Natural killer cell (primary cell): ENCODE measurements at regions of chr15 and their contacts with region 1.

Region 1: DNA sequence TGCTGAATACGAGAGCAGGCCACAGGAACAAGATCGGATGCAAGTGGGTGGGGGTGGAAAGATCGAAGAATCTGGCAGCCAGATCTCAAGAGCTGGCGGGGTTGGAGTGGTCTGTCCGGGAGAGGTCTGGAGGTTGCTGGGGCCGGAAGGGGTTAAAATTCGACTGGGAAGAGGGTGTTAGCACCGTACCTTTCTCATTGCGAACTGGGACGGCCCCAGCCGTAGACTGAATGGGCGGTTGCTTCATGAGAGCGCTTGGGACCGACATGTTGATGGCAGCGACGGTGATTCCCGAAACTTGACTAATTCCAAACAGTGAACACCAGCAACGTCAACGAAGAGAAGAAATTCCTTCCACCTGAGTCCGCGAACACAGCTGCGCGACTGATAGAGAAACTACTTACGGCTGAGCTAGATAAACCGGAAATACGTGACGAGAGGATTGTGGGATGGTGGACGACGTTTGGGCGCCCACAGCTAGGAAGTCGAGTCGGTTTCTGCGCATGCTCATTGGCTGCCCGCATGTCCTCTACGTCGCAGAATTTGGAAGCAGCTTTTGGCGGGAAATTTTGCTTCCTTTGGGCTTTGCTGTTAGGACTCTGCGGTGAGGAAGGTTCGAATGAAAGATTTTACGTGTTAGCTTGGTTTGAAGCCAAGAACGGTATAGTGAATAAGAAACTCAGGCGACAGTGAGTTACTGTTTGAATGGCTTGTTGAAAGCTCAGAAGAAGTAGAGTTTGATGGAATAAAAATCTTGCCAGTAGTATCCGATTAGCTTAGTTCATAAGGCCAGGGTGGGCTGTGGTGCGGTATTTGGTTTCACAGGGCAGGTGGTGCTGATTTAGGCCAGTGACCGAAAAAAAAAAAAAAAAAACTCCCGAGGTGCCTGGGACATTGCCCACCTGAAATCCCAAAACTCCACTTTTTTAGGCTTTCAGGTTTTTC is at the start of gene MFAP1:
- DNase-seq: peak; percentile 80 to 99
- ATAC-seq: peak; percentile 87 to 92 (median 90)
- H3K4me3 ChIP-seq: peak within 1 kb of the TSS; percentile 99
- H3K4me3 Mint-ChIP-seq: peak within 1 kb of the TSS; percentile 99
- H3K27ac ChIP-seq: peak within 1 kb of the TSS; percentile 97
- H3K27ac Mint-ChIP-seq: peak within 1 kb of the TSS; percentile 99
- H3K4me1 ChIP-seq: peaks cover 34% of the 10 kb centered on the region
- H3K4me1 Mint-ChIP-seq: peaks cover 44 to 50% of the 10 kb centered on the region in 2 donors
- H3K27me3 ChIP-seq: no peaks in the 10 kb centered on the region
- H3K27me3 Mint-ChIP-seq: no peaks in the 10 kb centered on the region
- CTCF ChIP-seq: no peak
- total RNA-seq, gene MFAP1: 10.2 to 13.3 (median 12.3) TPM

Region 2: GRCh38 chr15:43800286-43801141 is 24.1 kb before region 1 on chr15 and contains the start of gene HYPK:
- intact Hi-C with region 1: loop called (anchors 1 kb)
- DNase-seq: peak; percentile 89 to 96
- ATAC-seq: peak; percentile 98 to 99 (median 99)
- H3K4me3 ChIP-seq: peak within 1 kb of the TSS; percentile 90
- H3K4me3 Mint-ChIP-seq: peak within 1 kb of the TSS; percentile 98
- H3K27ac ChIP-seq: peak within 1 kb of the TSS; percentile 90
- H3K27ac Mint-ChIP-seq: peak within 1 kb of the TSS; percentile 92 to 96
- H3K4me1 ChIP-seq: peaks cover 20% of the 10 kb centered on the region
- H3K4me1 Mint-ChIP-seq: peaks cover 40 to 49% of the 10 kb centered on the region in 2 donors
- H3K27me3 ChIP-seq: no peaks in the 10 kb centered on the region
- H3K27me3 Mint-ChIP-seq: no peaks in the 10 kb centered on the region
- CTCF ChIP-seq: no peak
- total RNA-seq, gene HYPK: 19.8 to 29.3 (median 25.8) TPM

Region 3: GRCh38 chr15:43903864-43904290 is 79.3 kb after region 1 on chr15:
- intact Hi-C with region 1: no loop called
- DNase-seq: peak; percentile 17 to 73
- ATAC-seq: peak in 1 of 3 donors; percentile 77
- H3K4me3 ChIP-seq: no peak overlapping the region
- H3K4me3 Mint-ChIP-seq: no peak overlapping the region
- H3K27ac ChIP-seq: no peak overlapping the region
- H3K27ac Mint-ChIP-seq: no peak overlapping the region
- H3K4me1 ChIP-seq: no peaks in the 10 kb centered on the region
- H3K4me1 Mint-ChIP-seq: peaks cover 5% of the 10 kb centered on the region in 2 donors
- H3K27me3 ChIP-seq: no peaks in the 10 kb centered on the region
- H3K27me3 Mint-ChIP-seq: peaks cover 0 to 2% of the 10 kb centered on the region in 2 donors
- CTCF ChIP-seq: peak; percentile 62

Region 4: DNA sequence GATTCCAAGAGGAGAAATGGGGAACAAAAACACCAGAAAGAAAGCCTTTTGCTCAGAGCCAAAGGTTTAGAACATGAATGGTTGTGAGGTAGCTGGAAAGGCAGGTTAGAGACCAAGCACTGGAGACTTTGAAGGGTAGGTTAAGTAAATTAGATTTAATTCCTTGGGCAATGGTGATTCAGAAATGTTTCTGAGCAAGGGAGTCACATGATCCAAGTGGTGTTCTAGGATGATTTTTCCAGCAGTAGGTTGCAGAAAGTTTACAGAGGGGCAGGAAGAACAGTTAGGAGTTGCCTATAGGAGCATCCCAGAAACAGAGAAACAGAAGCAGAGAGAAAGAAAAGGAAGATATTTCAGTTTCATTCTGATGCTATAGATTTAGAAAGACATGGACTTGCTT is 142.1 kb after region 1 on chr15:
- intact Hi-C with region 1: no loop called
- DNase-seq: no peak
- ATAC-seq: no peak
- H3K4me3 ChIP-seq: no peak overlapping the region
- H3K4me3 Mint-ChIP-seq: no peak overlapping the region
- H3K27ac ChIP-seq: no peak overlapping the region
- H3K27ac Mint-ChIP-seq: no peak overlapping the region
- H3K4me1 ChIP-seq: no peaks in the 10 kb centered on the region
- H3K4me1 Mint-ChIP-seq: no peaks in the 10 kb centered on the region
- H3K27me3 ChIP-seq: no peaks in the 10 kb centered on the region
- H3K27me3 Mint-ChIP-seq: peaks cover 4 to 14% of the 10 kb centered on the region in 2 donors
- CTCF ChIP-seq: no peak